Caco-2 (cell line): ENCODE measurements at regions of chr11 and their contacts with region 1.

Region 1: DNA sequence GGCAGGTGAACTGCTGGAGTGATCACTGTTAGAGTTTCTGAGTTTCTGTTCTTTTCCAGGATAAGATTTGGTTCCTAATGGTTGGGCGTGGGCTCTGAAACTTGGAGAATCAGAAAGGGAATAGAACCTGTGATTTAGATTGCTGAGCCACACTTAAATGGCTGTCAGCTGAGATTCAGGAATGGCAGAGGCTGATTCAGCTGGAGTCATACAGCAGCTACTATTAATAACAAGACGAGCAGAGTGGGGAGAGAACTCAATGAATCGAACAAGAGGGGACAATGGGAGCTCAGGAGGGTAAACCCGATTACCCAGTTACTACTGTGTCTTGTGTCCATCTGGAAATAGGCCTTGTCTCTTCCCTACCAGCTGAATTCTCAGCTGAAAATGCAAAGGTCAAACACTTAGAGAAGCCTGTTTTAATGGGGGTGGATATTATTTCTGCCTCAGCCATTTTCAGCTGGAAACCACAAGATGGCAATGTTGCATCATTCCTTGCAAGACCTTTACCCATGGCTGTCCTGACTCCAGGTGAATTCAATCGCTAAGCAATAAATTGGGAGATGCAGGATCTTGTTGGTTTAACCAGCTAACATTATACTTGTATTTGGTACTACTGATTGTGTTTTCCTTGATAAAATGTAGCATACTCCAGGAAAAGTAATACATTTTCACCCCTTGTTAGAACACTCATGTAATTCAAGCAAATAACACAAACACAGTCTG is 104.5 kb upstream of the RAG2 start:
- DNase-seq: peak; percentile 56 to 64
- H3K4me3 ChIP-seq: no peak overlapping the region
- H3K4me3 Mint-ChIP-seq: no peak overlapping the region
- H3K27ac Mint-ChIP-seq: no peak overlapping the region
- H3K4me1 ChIP-seq: no peaks in the 10 kb centered on the region
- H3K4me1 Mint-ChIP-seq: no peaks in the 10 kb centered on the region
- H3K27me3 ChIP-seq: no peaks in the 10 kb centered on the region
- H3K27me3 Mint-ChIP-seq: peaks cover 2% of the 10 kb centered on the region
- CTCF ChIP-seq: peak; percentile 75 to 79

Region 2: GRCh38 chr11:36746886-36747710 is 44.6 kb after region 1 on chr11:
- CTCF ChIA-PET with region 1: interaction called, 75 read pairs
- POLR2A ChIA-PET with region 1: no interaction called
- intact Hi-C with region 1: loop called (anchors 1 kb)
- DNase-seq: peak; percentile 91 to 92
- H3K4me3 ChIP-seq: no peak overlapping the region
- H3K4me3 Mint-ChIP-seq: no peak overlapping the region
- H3K27ac Mint-ChIP-seq: no peak overlapping the region
- H3K4me1 ChIP-seq: no peaks in the 10 kb centered on the region
- H3K4me1 Mint-ChIP-seq: no peaks in the 10 kb centered on the region
- H3K27me3 ChIP-seq: no peaks in the 10 kb centered on the region; the same call in 1 of the 2 replicates
- H3K27me3 Mint-ChIP-seq: peaks cover 10% of the 10 kb centered on the region
- CTCF ChIP-seq: peak; percentile 99

Region 3: GRCh38 chr11:36818407-36818806 is 115.9 kb after region 1 on chr11:
- CTCF ChIA-PET with region 1: no interaction called
- POLR2A ChIA-PET with region 1: no interaction called
- intact Hi-C with region 1: loop called (anchors 1 kb)
- DNase-seq: peak in 1 of 2 experiments; percentile 25
- H3K4me3 ChIP-seq: no peak overlapping the region
- H3K4me3 Mint-ChIP-seq: no peak overlapping the region
- H3K27ac Mint-ChIP-seq: no peak overlapping the region
- H3K4me1 ChIP-seq: no peaks in the 10 kb centered on the region
- H3K4me1 Mint-ChIP-seq: no peaks in the 10 kb centered on the region
- H3K27me3 ChIP-seq: no peaks in the 10 kb centered on the region; the same call in 1 of the 2 replicates
- H3K27me3 Mint-ChIP-seq: peaks cover under 1% of the 10 kb centered on the region
- CTCF ChIP-seq: peak in 1 of 2 experiments; percentile 35

Region 4: GRCh38 chr11:36865846-36866245 is 163.4 kb after region 1 on chr11:
- CTCF ChIA-PET with region 1: no interaction called
- POLR2A ChIA-PET with region 1: no interaction called
- intact Hi-C with region 1: loop called (anchors 5 kb)
- DNase-seq: no peak
- H3K4me3 ChIP-seq: no peak overlapping the region
- H3K4me3 Mint-ChIP-seq: no peak overlapping the region
- H3K27ac Mint-ChIP-seq: no peak overlapping the region
- H3K4me1 ChIP-seq: peaks cover 11% of the 10 kb centered on the region; the same call in 1 of the 2 replicates
- H3K4me1 Mint-ChIP-seq: no peaks in the 10 kb centered on the region
- H3K27me3 ChIP-seq: no peaks in the 10 kb centered on the region
- H3K27me3 Mint-ChIP-seq: no peaks in the 10 kb centered on the region
- CTCF ChIP-seq: no peak